Body of pancreas (tissue), 4 donors: ENCODE measurements at regions of chr12 and their contacts with region 1.

Region 1: GRCh38 chr12:66107451-66107915 is 23.1 kb downstream of the LLPH start:
- DNase-seq: peak; percentile 37 to 82 (median 64)
- ATAC-seq: peak; percentile 95
- H3K4me3 ChIP-seq: no peak overlapping the region
- H3K27ac ChIP-seq: no peak overlapping the region
- H3K4me1 ChIP-seq: peaks cover 10% of the 10 kb centered on the region
- H3K27me3 ChIP-seq: no peaks in the 10 kb centered on the region
- CTCF ChIP-seq: peak; percentile 51 to 87 (median 83)
- POLR2A ChIP-seq: no peak

Region 2: DNA sequence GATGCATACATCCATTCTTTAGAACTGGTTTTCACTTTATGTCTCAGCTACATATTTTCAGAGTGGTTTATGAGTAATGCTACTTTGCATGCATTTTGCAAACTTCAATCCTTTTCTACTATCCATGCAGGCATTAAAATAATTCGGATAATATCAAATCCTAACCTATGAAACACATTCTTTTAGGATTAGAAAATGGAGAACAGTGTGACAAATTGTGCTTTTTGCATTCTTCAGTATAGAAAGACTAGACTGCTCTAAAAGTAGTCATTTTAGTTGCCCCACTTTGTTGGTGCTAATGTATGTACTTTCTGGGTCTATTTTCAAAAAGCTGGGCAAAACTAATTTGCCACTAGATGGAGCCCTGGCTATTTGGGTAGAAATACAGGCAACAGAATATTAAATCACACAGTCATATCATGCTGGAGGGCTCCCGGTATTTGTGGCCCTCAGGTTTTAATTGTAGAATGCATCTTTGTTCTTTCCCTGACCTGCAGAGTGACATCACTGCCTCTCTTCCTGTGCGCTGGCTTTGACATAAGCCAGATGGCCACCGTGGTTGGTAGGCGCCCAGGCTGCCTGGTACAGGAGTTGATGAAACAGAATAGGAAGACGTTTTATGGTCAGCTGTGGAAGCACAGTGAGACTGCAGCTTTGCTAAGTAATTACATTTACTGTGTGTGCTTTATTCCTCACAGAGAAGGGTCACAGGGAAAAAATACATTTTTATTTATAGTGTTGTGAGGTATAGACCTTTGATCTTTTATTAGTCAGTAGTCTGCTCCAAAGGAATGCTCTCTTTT is 800.9 kb before region 1 on chr12:
- intact Hi-C with region 1: loop called (anchors 10 kb)
- DNase-seq: peak in 2 of 4 donors; percentile 10 to 27
- ATAC-seq: peak; percentile 48
- H3K4me3 ChIP-seq: no peak overlapping the region
- H3K27ac ChIP-seq: no peak overlapping the region
- H3K4me1 ChIP-seq: no peaks in the 10 kb centered on the region
- H3K27me3 ChIP-seq: no peaks in the 10 kb centered on the region
- CTCF ChIP-seq: peak; percentile 33 to 59 (median 53)
- POLR2A ChIP-seq: no peak